WTC11 (cell line): ENCODE measurements at regions of chr13 and their contacts with region 1.

Region 1: GRCh38 chr13:105436943-105437342 is 1098.5 kb downstream of the EFNB2 start:
- DNase-seq: no peak
- ATAC-seq: no peak
- H3K4me3 Mint-ChIP-seq: no peak overlapping the region
- H3K27ac Mint-ChIP-seq: no peak overlapping the region
- H3K4me1 Mint-ChIP-seq: peaks cover 10% of the 10 kb centered on the region
- H3K27me3 Mint-ChIP-seq: no peaks in the 10 kb centered on the region
- CTCF ChIP-seq: no peak

Region 2: DNA sequence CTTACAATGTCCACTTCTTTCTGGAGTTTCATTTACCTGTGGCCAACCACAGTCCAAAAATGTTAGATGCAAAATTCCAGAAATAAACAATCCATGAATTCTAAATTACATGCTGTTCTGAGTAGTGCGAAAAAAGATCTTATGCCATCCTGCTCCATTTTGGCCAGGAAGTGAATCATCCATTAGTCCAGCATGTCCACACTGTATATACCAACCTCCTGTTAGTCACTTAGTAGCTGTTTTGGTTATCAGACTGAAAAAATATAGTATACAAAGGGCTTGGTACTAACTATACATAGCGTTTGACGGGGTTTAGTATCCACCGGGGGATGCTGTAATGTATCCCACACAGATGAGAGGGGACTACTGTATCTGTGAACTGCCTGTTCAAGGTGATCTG is 1748.9 kb after region 1 on chr13:
- CTCF ChIA-PET with region 1: no interaction called
- POLR2A ChIA-PET with region 1: interaction called, 10 read pairs
- DNase-seq: no peak
- ATAC-seq: no peak
- H3K4me3 Mint-ChIP-seq: no peak overlapping the region
- H3K27ac Mint-ChIP-seq: no peak overlapping the region
- H3K4me1 Mint-ChIP-seq: peaks cover 11% of the 10 kb centered on the region
- H3K27me3 Mint-ChIP-seq: peaks cover 18% of the 10 kb centered on the region
- CTCF ChIP-seq: no peak